Cardiac septum (tissue), 1 donor: ENCODE measurements at regions of chr1 and their contacts with region 1.

Region 1: DNA sequence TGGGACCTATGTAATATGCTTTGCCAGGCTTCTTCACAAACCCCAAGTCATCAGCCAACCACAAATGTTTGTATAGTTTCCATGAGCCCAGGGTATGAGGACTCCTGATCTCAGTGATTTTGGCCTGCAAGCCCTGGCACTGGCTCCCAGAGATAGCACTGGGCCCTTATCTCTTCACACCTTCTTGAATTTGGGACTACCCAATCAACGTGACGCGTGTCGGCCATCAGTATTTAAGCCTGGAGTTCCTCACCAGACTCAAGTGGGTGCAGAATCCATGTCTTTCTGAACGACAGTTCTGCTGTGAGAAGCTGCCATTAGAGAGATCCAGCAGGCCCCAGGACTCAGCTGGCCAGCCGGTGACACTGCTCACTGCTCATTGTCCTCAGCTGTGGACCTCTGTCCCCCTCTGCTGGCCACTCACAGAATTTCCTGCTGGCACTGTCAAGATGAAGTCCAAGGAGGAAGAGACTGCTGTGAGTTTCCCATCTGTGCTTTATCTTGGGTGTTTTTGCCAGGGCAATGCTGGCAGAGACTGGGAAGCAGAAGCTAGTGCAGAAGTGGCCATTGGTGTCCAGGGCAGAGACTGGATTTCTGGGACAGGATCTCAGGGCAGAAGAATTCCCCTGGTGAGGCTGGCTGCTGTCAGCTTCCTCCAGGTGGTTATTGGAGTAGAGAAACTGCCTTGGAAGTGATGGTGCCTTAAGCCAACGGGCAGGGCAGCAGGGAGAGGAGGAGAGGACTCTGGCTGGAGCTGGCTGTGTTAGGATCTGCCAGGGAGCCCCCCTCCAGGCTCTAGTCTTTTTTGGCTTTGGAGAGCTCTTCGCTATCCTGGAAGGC is 28.4 kb downstream of the TMCC2 start:
- DNase-seq: peak; percentile 94

Region 2: GRCh38 chr1:204989266-204990058 is 266.7 kb before region 1 on chr1:
- intact Hi-C with region 1: loop called (anchors 5 kb)
- DNase-seq: peak; percentile 87

Region 3: DNA sequence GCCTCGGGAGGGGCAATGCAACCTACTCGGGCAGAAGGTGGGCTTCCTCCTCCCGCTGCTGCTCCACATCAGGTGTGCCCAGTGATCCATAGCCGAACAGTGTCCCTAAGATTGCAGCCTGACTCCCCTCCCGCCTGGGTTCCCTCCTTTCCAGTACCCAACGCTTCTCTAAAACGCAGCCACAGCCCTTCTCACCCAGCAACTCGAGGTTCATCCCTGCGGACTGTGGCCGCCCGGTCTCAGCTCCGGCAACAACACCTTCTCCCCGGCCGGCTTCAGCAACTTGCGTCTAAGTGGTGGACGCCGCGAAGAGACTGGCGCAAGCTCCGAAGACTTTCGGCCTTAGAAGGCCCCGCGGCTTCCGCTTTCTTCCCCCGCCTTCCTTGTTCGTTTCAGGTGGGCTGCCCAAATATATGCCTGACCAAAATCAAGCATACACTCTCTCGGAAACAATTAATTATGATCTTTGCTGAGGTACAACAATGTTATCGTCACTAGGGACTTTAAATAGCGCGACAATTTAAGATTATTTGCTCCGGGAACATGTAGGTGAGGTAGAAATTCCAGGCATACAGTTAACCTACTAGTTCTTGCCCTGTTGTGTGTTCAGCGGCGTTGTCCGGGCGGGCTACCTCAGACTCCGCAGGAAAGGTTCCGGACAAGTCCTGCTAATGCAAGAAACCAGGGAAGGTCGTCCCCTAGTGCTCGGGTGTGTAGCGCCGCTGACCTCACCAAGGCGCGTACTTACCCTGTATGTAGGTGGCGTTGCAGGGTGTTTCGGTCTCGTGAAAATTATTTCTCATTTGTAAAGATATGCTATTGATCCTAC is 134.3 kb before region 1 on chr1 and contains the start of gene RBBP5:
- intact Hi-C with region 1: loop called (anchors 1 kb)
- DNase-seq: peak; percentile 97
- total RNA-seq, gene RBBP5: 10.1 TPM

Region 4: DNA sequence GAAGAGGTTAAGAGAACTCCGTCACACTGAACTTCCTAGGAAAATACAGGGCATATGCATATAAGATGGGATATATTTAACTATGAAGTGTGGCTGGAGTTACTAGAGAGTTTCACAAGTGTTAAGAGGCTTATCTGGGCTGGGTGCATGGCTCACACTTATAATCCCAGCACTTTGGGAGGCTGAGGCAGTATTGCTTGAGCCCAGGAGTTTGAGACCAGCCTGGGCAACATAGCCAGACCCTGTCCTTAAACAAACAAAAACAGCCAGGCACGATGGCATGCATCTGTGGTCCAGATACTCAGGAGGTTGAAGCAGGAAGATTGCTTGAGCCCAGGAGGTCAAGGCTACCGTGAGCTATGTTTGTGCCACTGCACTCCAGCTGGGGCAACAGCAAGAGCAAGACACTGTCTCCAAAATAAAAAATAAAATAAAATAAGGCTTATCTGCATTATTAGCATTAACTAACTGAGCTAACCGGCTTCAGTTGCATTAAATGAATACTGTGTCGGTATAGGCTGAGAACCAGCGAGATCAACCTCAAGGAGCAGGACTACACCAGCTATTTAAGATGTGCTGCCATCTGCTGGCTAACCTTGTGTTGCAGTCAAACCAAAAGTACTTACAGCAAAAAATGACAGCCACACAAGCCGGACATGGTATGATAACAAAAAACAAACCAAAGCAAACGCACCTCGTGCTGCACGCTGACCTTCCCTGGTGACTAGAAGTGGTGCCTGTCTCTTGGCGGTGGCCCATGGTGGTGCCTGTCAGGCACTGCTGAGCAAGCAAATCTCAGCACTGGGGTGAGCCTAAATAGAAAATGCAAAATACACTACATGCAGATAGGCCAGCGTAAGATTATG is 114.7 kb before region 1 on chr1:
- intact Hi-C with region 1: loop called (anchors 5 kb)
- DNase-seq: no peak

Region 5: GRCh38 chr1:205227584-205228006 is 28.6 kb before region 1 on chr1 and contains the start of gene TMCC2:
- intact Hi-C with region 1: loop called (anchors 2 kb)
- DNase-seq: peak; percentile 92
- total RNA-seq, gene TMCC2: 4.0 TPM